GM12878 (cell line): ENCODE measurements at regions of chr13 and their contacts with region 1.

Region 1: DNA sequence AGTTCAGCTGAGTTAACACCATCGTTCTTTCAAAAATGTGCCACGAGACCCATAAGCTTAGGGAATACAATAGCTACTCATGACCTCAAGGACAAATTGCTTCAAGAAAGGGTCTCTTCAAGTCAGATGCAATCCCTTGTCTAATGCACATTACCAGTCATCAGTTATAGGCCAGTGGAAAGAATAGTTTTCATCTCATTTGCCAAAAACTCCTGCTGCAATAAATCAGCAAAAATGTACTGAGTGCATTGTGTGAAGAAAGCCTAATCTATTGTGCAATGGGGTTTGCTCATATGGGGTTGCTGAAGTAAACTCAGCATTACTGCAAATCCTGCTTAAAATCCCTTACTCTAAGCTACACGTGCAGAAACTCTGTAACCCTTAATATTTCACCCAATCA is 208.3 kb upstream of the NBEA start:
- DNase-seq: no peak
- ATAC-seq: no peak
- H3K4me3 ChIP-seq: no peak overlapping the region
- H3K27ac ChIP-seq: no peak overlapping the region
- H3K4me1 ChIP-seq: no peaks in the 10 kb centered on the region
- H3K27me3 ChIP-seq: no peaks in the 10 kb centered on the region
- CTCF ChIP-seq: no peak
- EP300 ChIP-seq: no peak
- POLR2A ChIP-seq: no peak
- RAD21 ChIP-seq: no peak

Region 2: DNA sequence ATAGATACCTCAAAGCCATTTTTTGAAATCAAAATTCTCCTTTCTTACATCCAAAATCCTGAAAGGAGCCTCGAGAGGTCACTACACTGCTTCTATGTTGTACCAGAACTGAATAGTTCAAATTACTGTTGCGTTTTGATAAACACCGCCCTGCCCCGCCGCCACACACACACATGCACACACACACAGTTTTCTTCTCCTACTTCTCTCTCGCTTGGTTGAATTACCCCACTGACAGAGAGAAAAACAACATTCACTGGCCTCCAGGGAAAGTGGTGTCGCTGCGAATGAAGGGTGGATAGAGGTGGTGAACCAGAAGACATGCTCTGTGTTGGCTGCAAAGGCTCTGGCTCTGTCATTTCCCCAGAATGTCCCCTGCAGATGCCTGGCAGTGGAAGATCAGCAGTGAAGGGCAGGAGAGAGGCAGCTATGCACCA is 1099.2 kb before region 1 on chr13:
- CTCF ChIA-PET with region 1: no interaction called
- POLR2A ChIA-PET with region 1: no interaction called
- RAD21 ChIA-PET with region 1: no interaction called
- SMC1A ChIA-PET with region 1: no interaction called
- in situ Hi-C with region 1: no loop called
- intact Hi-C with region 1: no loop called
- DNase-seq: no peak
- ATAC-seq: no peak
- H3K4me3 ChIP-seq: no peak overlapping the region
- H3K27ac ChIP-seq: no peak overlapping the region
- H3K4me1 ChIP-seq: peaks cover 12% of the 10 kb centered on the region
- H3K27me3 ChIP-seq: no peaks in the 10 kb centered on the region
- CTCF ChIP-seq: no peak
- EP300 ChIP-seq: no peak
- POLR2A ChIP-seq: no peak
- RAD21 ChIP-seq: no peak

Region 3: DNA sequence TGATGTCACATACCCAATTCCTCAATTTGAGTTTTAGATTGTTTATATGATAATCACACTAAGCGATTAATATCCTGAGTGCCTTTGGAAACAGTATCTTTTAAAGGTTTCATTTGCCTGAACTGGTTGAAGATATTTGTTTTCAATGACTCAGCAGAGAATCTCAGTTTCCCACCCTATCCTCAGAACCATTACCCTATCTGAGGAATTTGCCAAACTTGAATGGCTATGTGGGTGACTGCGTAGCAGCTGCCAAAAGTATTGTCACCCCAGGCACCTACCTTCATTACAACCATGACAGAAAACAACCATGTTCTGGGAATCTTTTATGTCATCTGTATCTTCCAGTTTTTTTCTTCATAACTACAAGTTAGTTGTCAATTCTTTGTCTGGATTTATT is 231.7 kb before region 1 on chr13:
- CTCF ChIA-PET with region 1: no interaction called
- POLR2A ChIA-PET with region 1: no interaction called
- RAD21 ChIA-PET with region 1: no interaction called
- SMC1A ChIA-PET with region 1: no interaction called
- in situ Hi-C with region 1: no loop called
- intact Hi-C with region 1: no loop called
- DNase-seq: no peak
- ATAC-seq: no peak
- H3K4me3 ChIP-seq: no peak overlapping the region
- H3K27ac ChIP-seq: no peak overlapping the region
- H3K4me1 ChIP-seq: no peaks in the 10 kb centered on the region
- H3K27me3 ChIP-seq: no peaks in the 10 kb centered on the region
- CTCF ChIP-seq: no peak
- EP300 ChIP-seq: no peak
- POLR2A ChIP-seq: no peak
- RAD21 ChIP-seq: no peak

Region 4: GRCh38 chr13:34762312-34762711 is 28.6 kb after region 1 on chr13:
- CTCF ChIA-PET with region 1: no interaction called
- POLR2A ChIA-PET with region 1: no interaction called
- RAD21 ChIA-PET with region 1: no interaction called
- SMC1A ChIA-PET with region 1: no interaction called
- in situ Hi-C with region 1: no loop called
- intact Hi-C with region 1: no loop called
- DNase-seq: no peak
- ATAC-seq: no peak
- H3K4me3 ChIP-seq: no peak overlapping the region
- H3K27ac ChIP-seq: no peak overlapping the region
- H3K4me1 ChIP-seq: no peaks in the 10 kb centered on the region
- H3K27me3 ChIP-seq: no peaks in the 10 kb centered on the region
- CTCF ChIP-seq: no peak
- EP300 ChIP-seq: no peak
- POLR2A ChIP-seq: no peak
- RAD21 ChIP-seq: no peak

Region 5: GRCh38 chr13:34779171-34779570 is 45.4 kb after region 1 on chr13:
- CTCF ChIA-PET with region 1: no interaction called
- POLR2A ChIA-PET with region 1: no interaction called
- RAD21 ChIA-PET with region 1: no interaction called
- SMC1A ChIA-PET with region 1: no interaction called
- in situ Hi-C with region 1: loop called (anchors 5 kb)
- intact Hi-C with region 1: no loop called
- DNase-seq: no peak
- ATAC-seq: no peak
- H3K4me3 ChIP-seq: no peak overlapping the region
- H3K27ac ChIP-seq: no peak overlapping the region
- H3K4me1 ChIP-seq: no peaks in the 10 kb centered on the region
- H3K27me3 ChIP-seq: no peaks in the 10 kb centered on the region
- CTCF ChIP-seq: no peak
- EP300 ChIP-seq: no peak
- POLR2A ChIP-seq: no peak
- RAD21 ChIP-seq: no peak

Region 6: DNA sequence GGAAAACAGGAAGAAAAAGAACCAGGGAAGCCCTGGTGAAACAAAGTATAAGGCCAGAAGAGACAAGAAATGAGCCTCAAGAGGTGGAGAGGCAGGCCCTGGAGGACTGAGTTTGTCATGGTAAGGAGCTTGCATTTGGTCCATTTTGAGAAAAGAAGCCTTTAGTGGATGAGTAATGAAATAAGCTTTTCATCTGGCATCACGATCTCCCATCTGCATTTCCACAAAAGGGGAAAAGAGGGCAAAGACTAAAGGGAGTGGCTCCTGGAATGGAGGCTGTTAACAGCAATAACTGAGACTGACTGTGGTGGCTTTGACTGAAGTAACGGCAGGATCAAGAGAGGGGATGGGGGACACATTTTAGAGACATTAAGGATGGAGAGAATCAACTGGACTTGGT is 59.6 kb after region 1 on chr13:
- CTCF ChIA-PET with region 1: no interaction called
- POLR2A ChIA-PET with region 1: no interaction called
- RAD21 ChIA-PET with region 1: no interaction called
- SMC1A ChIA-PET with region 1: no interaction called
- in situ Hi-C with region 1: no loop called
- intact Hi-C with region 1: no loop called
- DNase-seq: no peak
- ATAC-seq: no peak
- H3K4me3 ChIP-seq: no peak overlapping the region
- H3K27ac ChIP-seq: no peak overlapping the region
- H3K4me1 ChIP-seq: no peaks in the 10 kb centered on the region
- H3K27me3 ChIP-seq: no peaks in the 10 kb centered on the region
- CTCF ChIP-seq: no peak
- EP300 ChIP-seq: no peak
- POLR2A ChIP-seq: no peak
- RAD21 ChIP-seq: no peak